ENCODE measurements at regions of chr3 and their contacts with region 1.

Region 1: GRCh38 chr3:160941885-160942494 is 163.2 kb downstream of the B3GALNT1 start:
- DNase-seq: peak; percentile 24
- H3K4me3 ChIP-seq: no peak overlapping the region
- H3K27ac ChIP-seq: no peak overlapping the region
- H3K27me3 ChIP-seq: no peaks in the 10 kb centered on the region
- CTCF ChIP-seq: peak; percentile 85

Region 2: DNA sequence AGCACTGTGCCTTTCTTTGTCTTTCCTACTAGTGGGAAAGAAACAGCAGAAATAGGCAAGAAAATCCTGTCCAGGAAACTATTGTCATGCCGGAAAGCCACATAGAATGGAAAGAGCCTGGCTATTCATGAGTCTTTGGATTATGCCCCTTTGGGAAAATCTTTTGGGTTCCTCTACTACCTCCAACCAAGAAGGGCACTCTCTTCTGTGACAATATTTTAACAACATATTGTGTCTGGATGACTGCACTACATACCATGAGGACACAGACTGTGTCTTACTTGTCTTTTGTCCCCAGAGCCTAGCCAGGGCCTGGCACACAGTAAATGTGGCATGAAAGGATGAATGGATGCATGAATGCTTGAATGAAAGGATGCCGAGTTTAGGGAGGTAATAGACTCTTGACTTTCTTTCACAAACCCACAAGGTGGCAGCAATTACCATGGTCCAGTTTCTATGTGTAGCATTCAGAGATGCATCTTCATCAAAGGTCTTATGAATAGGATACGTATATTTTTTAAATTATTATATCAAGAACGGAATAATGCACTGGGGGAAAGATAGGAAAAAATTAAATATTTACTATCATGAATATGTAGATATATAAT is 234.7 kb before region 1 on chr3:
- CTCF ChIA-PET with region 1: interaction called, 27 read pairs
- POLR2A ChIA-PET with region 1: no interaction called
- DNase-seq: no peak
- H3K4me3 ChIP-seq: no peak overlapping the region
- H3K27ac ChIP-seq: no peak overlapping the region
- H3K27me3 ChIP-seq: peaks cover 6% of the 10 kb centered on the region
- CTCF ChIP-seq: peak; percentile 60

Region 3: DNA sequence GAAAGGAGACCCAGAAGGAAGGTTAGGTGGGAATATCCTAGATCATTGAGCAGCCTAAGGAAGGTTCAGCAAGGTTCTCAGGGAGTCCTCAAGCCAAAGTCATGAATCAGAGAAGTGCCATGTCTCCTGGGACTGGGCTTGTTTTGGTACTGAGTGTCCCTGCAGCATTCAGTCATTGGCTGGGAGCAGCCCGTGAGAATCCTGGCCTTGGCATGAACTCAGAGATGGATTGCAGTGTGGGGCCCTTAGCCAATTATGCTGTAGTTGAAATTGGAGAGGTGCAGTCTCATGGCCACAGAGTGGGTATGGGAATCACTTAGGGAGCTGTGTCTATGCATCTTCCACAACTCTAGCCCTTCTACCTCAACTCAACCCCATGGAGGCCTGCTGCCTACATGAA is 202.9 kb before region 1 on chr3:
- CTCF ChIA-PET with region 1: no interaction called
- POLR2A ChIA-PET with region 1: no interaction called
- DNase-seq: no peak
- H3K4me3 ChIP-seq: no peak overlapping the region
- H3K27ac ChIP-seq: no peak overlapping the region
- H3K27me3 ChIP-seq: no peaks in the 10 kb centered on the region
- CTCF ChIP-seq: no peak

Region 4: DNA sequence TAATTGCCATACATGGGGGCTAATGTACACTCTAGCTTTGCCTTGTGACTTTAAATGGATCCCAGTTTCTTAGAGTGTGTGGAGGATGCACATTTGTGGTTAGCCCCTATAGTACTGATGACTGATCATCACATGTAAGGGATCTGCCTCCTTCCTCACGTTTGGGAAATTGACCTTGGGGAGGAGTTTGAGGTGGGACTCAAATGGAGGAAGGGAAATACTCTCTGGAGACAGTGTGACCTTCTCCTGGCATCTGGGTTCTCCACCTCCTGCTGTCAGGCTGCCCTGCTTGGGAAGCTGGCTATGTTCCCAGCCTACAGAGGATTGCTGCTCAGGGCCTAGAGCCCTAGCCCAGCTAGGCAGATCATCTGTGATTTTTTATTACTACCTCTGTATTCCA is 137.2 kb before region 1 on chr3:
- CTCF ChIA-PET with region 1: no interaction called
- POLR2A ChIA-PET with region 1: no interaction called
- DNase-seq: no peak
- H3K4me3 ChIP-seq: no peak overlapping the region
- H3K27ac ChIP-seq: no peak overlapping the region
- H3K27me3 ChIP-seq: no peaks in the 10 kb centered on the region
- CTCF ChIP-seq: no peak

Region 5: DNA sequence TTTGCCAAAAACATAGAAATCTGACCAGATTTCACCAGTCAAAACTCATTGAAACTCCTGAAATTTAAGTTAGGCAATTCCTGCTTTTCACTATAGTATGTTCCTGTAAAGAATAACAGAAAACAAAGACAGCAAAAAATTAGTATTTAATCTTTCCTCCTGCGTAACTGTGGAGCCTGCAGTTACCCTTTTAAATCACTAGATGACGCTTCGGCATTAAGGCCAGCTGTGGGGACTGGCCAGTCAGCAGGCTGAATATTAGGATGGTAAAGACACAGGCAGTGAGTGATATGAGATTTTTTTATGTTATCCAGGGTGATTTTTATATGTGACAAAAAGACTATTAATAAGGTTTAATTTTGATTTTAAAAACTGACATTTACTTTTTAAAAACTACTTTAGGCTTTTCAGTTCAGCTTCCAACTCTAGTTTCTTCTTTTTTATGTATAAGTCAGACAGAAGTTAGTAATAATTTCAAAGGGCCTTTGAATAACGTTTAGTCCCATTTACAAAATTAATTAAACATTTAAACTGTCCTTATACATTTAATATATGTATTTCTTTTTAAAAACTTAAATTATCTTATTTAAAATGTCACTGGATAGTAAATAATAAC is 20.9 kb before region 1 on chr3:
- CTCF ChIA-PET with region 1: interaction called, 32 read pairs
- POLR2A ChIA-PET with region 1: no interaction called
- DNase-seq: no peak
- H3K4me3 ChIP-seq: no peak overlapping the region
- H3K27ac ChIP-seq: no peak overlapping the region
- H3K27me3 ChIP-seq: no peaks in the 10 kb centered on the region
- CTCF ChIP-seq: peak; percentile 92

Region 6: GRCh38 chr3:160929595-160929994 is 12.4 kb before region 1 on chr3:
- CTCF ChIA-PET with region 1: interaction called, 23 read pairs
- POLR2A ChIA-PET with region 1: no interaction called
- DNase-seq: no peak
- H3K4me3 ChIP-seq: no peak overlapping the region
- H3K27ac ChIP-seq: no peak overlapping the region
- H3K27me3 ChIP-seq: no peaks in the 10 kb centered on the region
- CTCF ChIP-seq: peak; percentile 20

Region 7: DNA sequence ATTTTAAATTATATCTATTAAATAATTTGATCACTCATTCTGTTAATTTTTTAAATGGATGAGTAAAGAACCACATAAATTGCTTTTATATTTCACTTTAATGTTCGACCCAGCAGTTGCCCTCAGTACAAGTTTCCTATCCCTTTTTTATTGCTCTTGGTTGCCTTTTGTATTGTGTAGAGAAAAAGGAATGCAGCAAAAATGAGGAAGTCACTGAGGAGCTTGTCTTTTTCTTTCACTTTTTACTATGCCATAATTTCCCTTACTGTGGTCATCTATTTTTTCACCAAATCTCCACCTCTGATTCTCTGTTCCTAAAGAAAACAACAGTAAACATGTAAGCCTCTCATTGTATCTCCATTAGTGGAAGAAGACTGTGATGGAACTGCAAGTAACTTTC is 40.5 kb after region 1 on chr3:
- CTCF ChIA-PET with region 1: no interaction called
- POLR2A ChIA-PET with region 1: no interaction called
- DNase-seq: no peak
- H3K4me3 ChIP-seq: no peak overlapping the region
- H3K27ac ChIP-seq: no peak overlapping the region
- H3K27me3 ChIP-seq: no peaks in the 10 kb centered on the region
- CTCF ChIP-seq: no peak

Measured in AG04450 (cell line).